ENCODE measurements at regions of chr2 and their contacts with region 1.

Region 1: DNA sequence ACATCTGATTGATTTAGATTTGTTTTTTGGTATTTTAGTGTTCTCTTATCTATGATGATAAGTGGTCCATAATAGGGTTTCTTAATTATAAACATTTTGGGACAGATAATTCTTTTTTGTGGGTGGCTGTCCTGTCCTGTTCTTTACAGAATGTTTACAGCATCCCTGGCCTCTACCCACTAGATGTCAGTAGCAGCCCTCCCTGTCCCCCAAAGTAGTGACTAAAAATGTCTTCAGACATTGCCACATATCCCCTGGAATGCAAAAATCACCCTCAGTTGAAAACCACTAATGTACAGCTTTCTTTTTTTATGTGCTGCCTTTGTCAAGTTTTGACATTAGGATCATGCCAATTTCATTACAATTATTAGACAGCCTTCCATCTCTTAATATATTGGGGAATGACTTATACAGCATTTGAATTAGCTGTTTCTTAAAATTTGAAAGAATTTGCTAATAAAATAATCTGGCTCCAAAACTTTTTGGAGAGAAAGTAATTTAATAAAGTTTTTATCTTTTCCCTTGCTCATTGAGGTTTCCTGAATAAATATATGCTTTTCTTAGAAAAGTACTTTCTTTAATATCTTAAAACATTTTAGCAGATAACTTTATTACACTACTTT is 19.5 kb downstream of the WIPF1 start:
- DNase-seq: peak; percentile 70
- H3K4me3 Mint-ChIP-seq: no peak overlapping the region
- H3K27ac Mint-ChIP-seq: peak overlapping the region; percentile 54
- H3K4me1 Mint-ChIP-seq: peaks cover 78% of the 10 kb centered on the region
- H3K27me3 Mint-ChIP-seq: no peaks in the 10 kb centered on the region

Region 2: DNA sequence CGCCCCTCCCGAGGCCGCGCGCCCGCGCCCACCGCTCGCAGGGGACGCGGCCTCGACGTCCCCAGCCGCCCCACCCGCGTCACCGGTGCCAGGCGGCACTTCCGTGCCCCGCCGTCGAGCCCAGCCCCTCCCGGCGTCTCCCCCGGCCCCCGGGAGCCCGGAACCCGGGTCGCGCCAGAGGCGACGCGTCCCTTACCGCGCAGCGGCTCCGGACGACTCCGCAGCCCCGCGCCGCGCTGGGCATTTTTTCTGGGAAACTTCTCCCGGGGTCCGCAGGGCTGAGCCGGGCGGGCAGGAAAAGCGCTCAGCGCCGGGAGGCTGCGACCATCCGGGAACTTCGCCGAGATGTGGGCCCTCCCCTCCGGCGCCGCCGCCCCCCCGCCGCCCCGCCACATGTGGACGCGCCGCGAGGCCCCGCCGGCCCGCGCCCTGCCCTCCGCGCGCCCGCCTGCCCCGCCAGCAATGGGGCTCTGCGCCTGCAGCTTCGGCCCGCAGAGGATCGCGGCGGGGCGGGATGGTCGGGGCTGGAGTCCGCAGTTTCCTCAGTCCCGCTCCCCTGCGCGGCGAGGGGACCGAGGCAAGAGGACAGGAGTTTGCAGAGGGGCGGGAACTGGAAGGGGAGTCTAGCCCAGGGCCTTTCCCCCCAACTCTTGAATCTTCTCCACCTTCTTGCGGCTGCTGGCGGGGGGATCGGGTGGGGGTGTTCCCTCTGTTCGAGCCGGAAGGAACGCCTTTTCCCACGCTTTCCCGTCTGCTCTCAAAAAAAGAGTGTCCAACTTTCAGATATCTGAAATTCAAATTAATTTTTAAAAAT is 104.7 kb after region 1 on chr2:
- CTCF ChIA-PET with region 1: interaction called, 116 read pairs
- POLR2A ChIA-PET with region 1: interaction called, 3 read pairs
- intact Hi-C with region 1: loop called (anchors 1 kb)
- DNase-seq: peak; percentile 62
- H3K4me3 Mint-ChIP-seq: peak overlapping the region; percentile 86
- H3K27ac Mint-ChIP-seq: peak overlapping the region; percentile 88
- H3K4me1 Mint-ChIP-seq: peaks cover 54% of the 10 kb centered on the region
- H3K27me3 Mint-ChIP-seq: no peaks in the 10 kb centered on the region

Region 3: DNA sequence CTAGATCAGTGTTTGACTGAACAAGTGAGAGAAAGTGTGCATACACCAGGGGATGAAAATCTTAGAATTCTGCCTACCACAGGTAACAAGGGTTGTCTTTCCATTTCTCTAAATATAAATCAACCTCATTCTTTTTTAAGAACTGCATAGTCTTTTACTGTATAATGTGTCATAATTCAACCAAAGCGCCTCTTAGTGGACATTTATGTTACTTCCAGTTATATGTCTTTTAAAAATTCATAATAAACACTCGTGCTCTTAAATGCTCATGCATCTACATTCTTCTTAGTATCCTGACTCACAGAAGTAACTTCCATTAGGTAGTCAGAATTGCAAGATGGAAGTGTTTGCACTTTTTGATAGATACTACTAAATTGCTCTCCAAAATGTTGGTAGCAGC is 110.0 kb after region 1 on chr2:
- CTCF ChIA-PET with region 1: interaction called, 116 read pairs
- POLR2A ChIA-PET with region 1: interaction called, 3 read pairs
- intact Hi-C with region 1: loop called (anchors 1 kb)
- DNase-seq: no peak
- H3K4me3 Mint-ChIP-seq: no peak overlapping the region
- H3K27ac Mint-ChIP-seq: no peak overlapping the region
- H3K4me1 Mint-ChIP-seq: peaks cover 32% of the 10 kb centered on the region
- H3K27me3 Mint-ChIP-seq: no peaks in the 10 kb centered on the region

Region 4: DNA sequence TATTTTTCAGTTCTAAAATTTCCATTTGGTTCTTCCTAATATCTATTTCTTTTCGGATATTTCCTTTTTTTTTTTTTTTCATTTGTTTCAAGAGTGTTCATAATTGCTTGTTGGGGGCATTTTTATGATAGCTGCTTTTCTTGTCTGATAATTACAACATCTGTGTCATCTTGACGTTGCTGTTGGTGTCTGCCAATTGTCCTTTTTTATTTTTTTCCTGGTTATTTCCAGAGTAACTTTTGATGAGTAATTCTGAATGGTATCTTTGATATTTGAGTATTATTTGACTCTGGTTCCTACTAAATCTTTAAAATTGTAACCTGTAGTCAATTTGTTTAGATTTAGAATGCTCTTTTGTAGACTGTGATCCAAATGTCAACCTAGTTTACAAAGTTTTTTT is 237.4 kb after region 1 on chr2:
- CTCF ChIA-PET with region 1: no interaction called
- POLR2A ChIA-PET with region 1: no interaction called
- intact Hi-C with region 1: no loop called
- DNase-seq: no peak
- H3K4me3 Mint-ChIP-seq: no peak overlapping the region
- H3K27ac Mint-ChIP-seq: no peak overlapping the region
- H3K4me1 Mint-ChIP-seq: no peaks in the 10 kb centered on the region
- H3K27me3 Mint-ChIP-seq: no peaks in the 10 kb centered on the region